ENCODE measurements at regions of chr12 and their contacts with region 1.

Region 1: DNA sequence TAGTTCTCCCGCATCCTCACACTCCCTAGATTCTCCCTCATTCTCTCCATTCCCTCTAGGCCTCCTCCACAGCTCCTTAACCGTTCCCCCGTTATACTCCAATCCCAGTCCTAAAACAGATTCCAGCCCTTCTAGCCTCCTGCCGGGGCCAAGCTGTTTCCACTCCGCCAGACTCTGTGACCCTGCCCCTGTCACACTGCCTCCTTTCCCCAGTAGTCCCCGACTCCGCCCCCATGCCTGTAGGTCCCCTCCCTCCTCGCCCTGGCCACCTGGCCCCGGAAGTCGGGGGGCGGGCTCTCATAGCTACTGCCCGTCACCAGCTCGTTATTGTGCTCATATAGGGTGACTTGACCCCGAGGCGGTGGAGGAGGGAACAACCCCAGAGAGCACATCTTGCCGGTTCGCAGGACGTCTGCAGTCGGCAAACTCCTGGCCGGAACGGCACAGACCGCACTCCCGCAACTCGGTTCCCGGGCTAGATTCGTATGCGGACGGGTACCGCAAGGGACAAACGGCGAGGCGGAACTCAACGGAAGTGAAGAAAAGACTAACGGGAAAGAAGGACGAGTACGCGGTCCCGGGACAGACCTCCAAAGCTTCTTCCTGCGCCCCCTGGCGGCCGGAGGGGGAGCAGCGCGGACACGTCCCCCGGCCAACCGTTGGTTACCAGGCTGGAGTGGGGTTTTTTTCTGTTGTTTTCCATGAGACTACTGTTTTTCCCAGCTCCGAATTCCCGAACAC is at the start of gene AAAS:
- DNase-seq: peak; percentile 92
- H3K4me3 ChIP-seq: peak within 1 kb of the TSS; percentile 74 to 86 (median 76)
- H3K27ac ChIP-seq: peak within 1 kb of the TSS; percentile 53
- H3K4me1 ChIP-seq: peaks cover 29% of the 10 kb centered on the region
- H3K27me3 ChIP-seq: no peaks in the 10 kb centered on the region
- CTCF ChIP-seq: peak; percentile 98 to 99
- total RNA-seq, gene AAAS: 29.2 to 45.4 TPM

Region 2: DNA sequence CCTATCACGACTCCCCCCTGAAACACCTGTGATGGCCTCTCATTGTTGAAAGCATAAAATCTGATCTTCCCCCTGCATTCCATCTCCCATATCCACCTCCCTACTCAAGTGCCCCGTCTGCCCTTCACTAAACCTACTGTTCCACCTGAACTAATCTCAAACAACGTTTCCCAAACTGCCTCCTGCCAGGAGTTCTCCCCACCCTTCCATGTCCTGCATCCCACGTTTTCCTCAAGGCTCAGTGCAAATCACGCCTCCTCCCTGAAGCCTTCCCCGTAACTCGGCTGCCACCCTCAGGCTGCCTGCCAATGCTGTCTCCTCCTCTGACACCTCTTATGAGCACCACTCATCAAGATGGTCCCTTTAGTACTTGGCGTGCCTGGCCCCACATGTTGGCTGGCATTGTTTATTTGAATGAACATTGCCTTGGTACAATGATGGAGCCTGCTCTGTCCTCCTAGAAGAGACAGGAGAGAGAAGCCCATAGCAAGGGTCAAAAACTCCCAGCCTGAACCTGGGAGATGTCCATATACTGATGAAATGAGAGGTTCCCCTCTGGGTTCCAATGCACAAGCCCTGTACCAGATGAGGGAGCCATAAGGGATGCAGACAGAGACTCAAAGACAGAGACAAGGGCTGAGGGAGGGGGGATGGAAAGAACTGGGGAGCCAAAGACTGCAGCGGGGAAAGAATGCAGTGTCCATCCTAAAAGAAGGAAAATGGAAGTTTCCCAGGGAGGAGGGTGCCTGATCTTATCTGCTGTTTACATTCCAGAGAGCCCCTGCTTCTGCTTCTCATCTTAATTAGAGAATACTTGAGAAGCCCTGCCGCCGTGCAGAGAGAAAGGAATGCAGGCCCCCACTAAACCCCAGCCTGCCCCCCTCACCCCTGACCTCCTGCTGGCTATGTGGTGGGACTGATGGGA is 344.8 kb before region 1 on chr12:
- CTCF ChIA-PET with region 1: no interaction called
- dilution Hi-C with region 1: no loop called
- in situ Hi-C with region 1: no loop called
- intact Hi-C with region 1: no loop called
- DNase-seq: peak; percentile 25
- H3K4me3 ChIP-seq: no peak overlapping the region
- H3K27ac ChIP-seq: no peak overlapping the region
- H3K4me1 ChIP-seq: peaks cover 15% of the 10 kb centered on the region
- H3K27me3 ChIP-seq: no peaks in the 10 kb centered on the region
- CTCF ChIP-seq: peak; percentile 31 to 50

Region 3: DNA sequence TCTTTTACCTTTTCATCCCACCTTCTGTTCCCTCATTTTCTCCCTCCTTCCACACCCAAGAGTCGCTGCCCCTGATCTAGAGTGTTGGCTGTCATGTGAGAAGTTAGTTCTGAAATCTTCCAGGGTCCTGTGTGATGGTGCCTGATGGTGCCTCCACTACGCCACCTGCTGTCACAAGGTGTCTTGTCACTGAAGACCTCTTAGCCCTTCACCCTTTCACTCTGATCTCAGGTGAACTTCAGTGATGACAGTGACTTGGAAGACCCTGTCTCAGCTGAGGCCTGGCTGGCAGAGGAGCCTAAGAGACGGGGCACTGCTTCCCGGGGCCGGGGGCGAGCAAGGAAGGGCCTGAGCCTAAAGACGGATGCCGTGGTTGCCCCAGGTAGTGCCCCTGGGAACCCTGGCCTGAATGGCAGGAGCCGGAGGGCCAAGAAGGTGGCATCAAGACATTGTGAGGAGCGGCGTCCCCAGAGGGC is 33.5 kb before region 1 on chr12:
- CTCF ChIA-PET with region 1: no interaction called
- dilution Hi-C with region 1: loop called (anchors 5 kb)
- in situ Hi-C with region 1: no loop called
- intact Hi-C with region 1: no loop called
- DNase-seq: peak; percentile 43
- H3K4me3 ChIP-seq: no peak overlapping the region
- H3K27ac ChIP-seq: no peak overlapping the region
- H3K4me1 ChIP-seq: no peaks in the 10 kb centered on the region
- H3K27me3 ChIP-seq: no peaks in the 10 kb centered on the region
- CTCF ChIP-seq: peak; percentile 51 to 80

Region 4: DNA sequence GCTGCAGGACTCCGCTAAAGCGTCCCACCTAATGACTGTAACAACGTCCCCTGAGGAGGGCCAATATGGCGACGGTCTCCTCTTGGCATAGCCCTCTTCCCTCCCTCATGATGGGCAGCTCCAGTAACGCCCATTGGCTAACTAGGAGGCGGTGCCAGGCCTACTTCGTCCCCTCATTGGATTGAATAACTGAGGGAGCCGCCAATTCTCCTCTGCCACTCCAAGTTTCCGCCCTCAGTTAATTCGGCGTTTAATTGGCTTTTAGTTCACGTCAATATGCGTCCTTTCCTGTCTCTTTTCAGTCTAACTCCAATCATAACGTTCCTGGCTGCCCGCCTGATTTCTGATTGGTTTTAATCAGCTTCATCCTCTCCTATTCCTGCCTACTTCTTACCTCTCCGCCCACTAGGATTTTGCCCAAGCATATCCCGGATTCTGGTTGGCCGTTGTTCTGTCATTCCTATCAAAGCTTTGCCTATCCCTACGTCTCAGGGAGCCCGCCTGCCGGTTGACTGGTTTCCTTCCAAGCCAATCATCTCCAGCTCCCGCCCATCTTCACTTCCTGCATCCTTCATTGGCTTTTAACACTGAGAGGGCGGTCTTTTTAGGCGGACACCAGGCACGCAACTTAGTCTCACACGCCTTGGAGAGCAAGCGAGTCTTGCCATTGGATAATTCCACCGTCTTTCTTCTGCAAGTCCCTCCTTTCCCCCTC is 58.3 kb after region 1 on chr12:
- CTCF ChIA-PET with region 1: interaction called, 8 read pairs
- dilution Hi-C with region 1: no loop called
- in situ Hi-C with region 1: no loop called
- intact Hi-C with region 1: loop called (anchors 1 kb)
- DNase-seq: peak; percentile 100
- H3K4me3 ChIP-seq: peak overlapping the region; percentile 32 to 55 (median 45)
- H3K27ac ChIP-seq: peak overlapping the region; percentile 65
- H3K4me1 ChIP-seq: peaks cover 38% of the 10 kb centered on the region
- H3K27me3 ChIP-seq: no peaks in the 10 kb centered on the region
- CTCF ChIP-seq: no peak

Region 5: DNA sequence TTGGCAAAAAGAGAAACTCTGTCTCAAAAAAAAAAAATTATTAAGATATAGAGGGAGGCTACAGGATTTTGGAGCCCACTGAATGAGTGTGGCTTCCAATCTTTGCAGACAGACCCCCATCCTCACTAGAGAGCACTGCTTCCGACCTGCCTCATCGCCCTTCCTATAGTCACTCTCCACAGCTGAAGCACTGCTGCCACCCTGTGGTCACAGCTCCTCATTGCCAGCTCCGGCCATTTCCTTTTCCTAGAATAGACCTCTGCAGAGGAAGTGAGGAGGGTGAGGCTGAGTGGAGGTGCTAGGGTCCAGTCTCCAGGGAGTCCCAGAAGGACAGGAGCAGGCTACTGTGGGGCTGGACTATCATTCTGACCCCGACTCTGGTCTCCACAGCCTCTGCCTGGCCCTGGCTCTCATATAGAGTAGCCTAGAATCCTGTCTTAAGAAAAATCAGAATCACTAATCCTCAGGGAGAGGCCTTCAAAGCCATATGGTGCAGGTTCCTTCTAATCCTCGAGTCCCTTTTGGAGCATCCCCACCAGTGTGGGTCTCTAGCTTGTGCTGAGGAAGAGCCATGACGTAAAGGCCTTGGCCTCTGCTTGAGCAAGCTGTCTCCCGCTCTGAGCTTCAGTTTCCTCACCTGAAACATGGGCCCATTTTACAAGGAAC is 187.4 kb after region 1 on chr12:
- CTCF ChIA-PET with region 1: no interaction called
- dilution Hi-C with region 1: no loop called
- in situ Hi-C with region 1: loop called in 1 of 2 experiments (anchors 5 kb)
- intact Hi-C with region 1: loop called (anchors 1 kb)
- DNase-seq: peak; percentile 61
- H3K4me3 ChIP-seq: no peak overlapping the region
- H3K27ac ChIP-seq: no peak overlapping the region
- H3K4me1 ChIP-seq: no peaks in the 10 kb centered on the region
- H3K27me3 ChIP-seq: no peaks in the 10 kb centered on the region
- CTCF ChIP-seq: peak; percentile 93 to 97

Region 6: GRCh38 chr12:53675651-53676453 is 354.6 kb after region 1 on chr12 and contains the start of gene ATP5MC2:
- CTCF ChIA-PET with region 1: no interaction called
- dilution Hi-C with region 1: no loop called
- in situ Hi-C with region 1: no loop called
- intact Hi-C with region 1: loop called (anchors 10 kb)
- DNase-seq: peak; percentile 98
- H3K4me3 ChIP-seq: peak within 1 kb of the TSS; percentile 53 to 70 (median 61)
- H3K27ac ChIP-seq: peak within 1 kb of the TSS; percentile 51
- H3K4me1 ChIP-seq: peaks cover 23% of the 10 kb centered on the region
- H3K27me3 ChIP-seq: no peaks in the 10 kb centered on the region
- CTCF ChIP-seq: peak; percentile 95 to 100
- total RNA-seq, gene ATP5MC2: 47.2 to 140 TPM

Measured in mammary epithelial cell (primary cell).